CD4-positive, alpha-beta T cell (primary cell): ENCODE measurements at regions of chr3 and their contacts with region 1.

Region 1: DNA sequence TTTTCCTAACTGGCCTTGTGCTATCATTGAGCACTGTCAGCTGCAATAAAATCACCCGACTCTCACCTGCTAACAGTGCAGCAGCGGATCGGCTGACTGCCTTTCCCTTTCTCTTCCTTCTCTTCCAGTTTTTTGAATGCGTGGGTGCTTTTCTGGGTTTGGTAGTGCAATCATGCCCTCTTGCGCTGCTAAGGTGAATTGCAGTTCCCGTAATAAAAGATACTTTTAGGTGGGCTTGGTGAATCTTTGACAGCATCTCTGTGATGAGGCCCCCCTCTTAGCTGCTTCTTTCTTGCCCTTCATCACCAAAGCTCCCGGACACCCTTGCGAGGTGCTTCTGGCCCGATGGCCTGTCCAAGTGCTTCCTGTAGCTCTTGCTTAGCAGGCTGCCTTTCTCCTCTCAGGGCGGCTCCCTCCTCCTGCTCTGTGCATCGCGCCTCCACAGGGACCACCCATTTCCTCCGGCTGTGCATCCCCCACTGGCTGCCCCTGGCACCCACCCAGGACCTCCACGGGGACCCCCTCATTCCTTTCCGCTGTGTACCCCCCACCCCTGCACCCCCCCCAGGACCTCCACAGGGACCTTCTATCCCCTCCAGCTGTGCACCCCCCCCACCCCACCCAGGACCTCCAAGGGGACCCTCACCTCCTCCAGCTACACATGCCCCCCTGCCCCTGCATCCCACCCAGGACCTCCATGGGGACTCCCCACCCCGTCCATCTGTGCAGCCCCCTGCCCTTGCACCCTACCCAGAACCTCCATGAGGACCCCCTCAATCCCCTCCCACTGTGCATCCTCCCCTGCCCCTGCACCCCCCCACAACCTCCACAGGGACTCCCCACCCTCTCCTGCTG is 50.8 kb upstream of the RPL32 start:
- DNase-seq: peak in 9 of 14 experiments; percentile 14 to 75 (median 29)
- ATAC-seq: peak; percentile 66
- H3K4me3 ChIP-seq: no peak overlapping the region
- H3K4me3 Mint-ChIP-seq: peak overlapping the region; percentile 7
- H3K27ac ChIP-seq: no peak overlapping the region
- H3K27ac Mint-ChIP-seq: no peak overlapping the region
- H3K4me1 ChIP-seq: peaks cover 11% of the 10 kb centered on the region
- H3K4me1 Mint-ChIP-seq: peaks cover 16% of the 10 kb centered on the region
- H3K27me3 ChIP-seq: peaks cover 5 to 7% of the 10 kb centered on the region in 2 experiments
- H3K27me3 Mint-ChIP-seq: peaks cover 20% of the 10 kb centered on the region
- CTCF ChIP-seq: peak; percentile 93

Region 2: DNA sequence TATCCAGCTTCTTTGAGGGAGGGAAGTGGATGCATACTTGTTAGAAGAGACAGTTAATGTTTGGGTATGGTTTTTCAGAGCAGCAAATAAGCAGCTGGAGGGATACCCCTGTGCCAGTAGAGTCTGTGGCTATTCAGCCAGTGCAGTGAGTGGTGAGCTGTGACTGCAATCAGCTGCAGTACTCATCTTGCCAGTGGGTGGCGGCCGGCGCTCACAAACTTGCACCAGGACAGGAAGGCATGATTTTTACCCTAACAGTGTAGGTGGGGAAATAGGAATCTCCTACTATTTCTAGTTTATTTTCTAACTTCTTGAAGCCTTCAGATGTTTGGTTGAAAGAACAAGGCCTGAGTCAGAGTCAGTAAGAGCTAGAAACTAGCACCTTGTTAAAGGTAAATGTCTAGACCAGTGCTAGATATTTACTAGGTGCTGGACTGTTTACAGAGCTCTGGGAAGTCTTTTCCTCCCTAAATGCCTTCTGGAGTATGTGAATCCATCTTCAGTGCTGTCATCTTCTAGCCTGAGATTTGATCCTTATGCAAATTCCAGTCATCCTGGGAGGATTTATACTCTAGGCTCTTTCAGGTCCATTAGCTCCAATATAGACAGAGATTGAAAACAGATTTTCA is 757.1 kb before region 1 on chr3:
- CTCF ChIA-PET with region 1: no interaction called
- POLR2A ChIA-PET with region 1: no interaction called
- intact Hi-C with region 1: loop called in 1 of 2 experiments (anchors 10 kb)
- DNase-seq: peak; percentile 25 to 75 (median 45)
- ATAC-seq: peak; percentile 86
- H3K4me3 ChIP-seq: no peak overlapping the region
- H3K4me3 Mint-ChIP-seq: no peak overlapping the region
- H3K27ac ChIP-seq: no peak overlapping the region
- H3K27ac Mint-ChIP-seq: no peak overlapping the region
- H3K4me1 ChIP-seq: no peaks in the 10 kb centered on the region
- H3K4me1 Mint-ChIP-seq: no peaks in the 10 kb centered on the region
- H3K27me3 ChIP-seq: peaks cover 0 to 5% of the 10 kb centered on the region in 2 experiments
- H3K27me3 Mint-ChIP-seq: peaks cover 20% of the 10 kb centered on the region
- CTCF ChIP-seq: peak; percentile 77

Region 3: GRCh38 chr3:12495749-12496452 is 396.3 kb before region 1 on chr3:
- CTCF ChIA-PET with region 1: no interaction called
- POLR2A ChIA-PET with region 1: no interaction called
- intact Hi-C with region 1: no loop called
- DNase-seq: no peak
- ATAC-seq: no peak
- H3K4me3 ChIP-seq: no peak overlapping the region
- H3K4me3 Mint-ChIP-seq: no peak overlapping the region
- H3K27ac ChIP-seq: no peak overlapping the region
- H3K27ac Mint-ChIP-seq: no peak overlapping the region
- H3K4me1 ChIP-seq: no peaks in the 10 kb centered on the region
- H3K4me1 Mint-ChIP-seq: no peaks in the 10 kb centered on the region
- H3K27me3 ChIP-seq: no peaks in the 10 kb centered on the region
- H3K27me3 Mint-ChIP-seq: no peaks in the 10 kb centered on the region
- CTCF ChIP-seq: no peak

Region 4: GRCh38 chr3:12706504-12707253 is 185.5 kb before region 1 on chr3:
- CTCF ChIA-PET with region 1: no interaction called
- POLR2A ChIA-PET with region 1: no interaction called
- intact Hi-C with region 1: loop called (anchors 5 kb)
- DNase-seq: peak; percentile 12 to 81 (median 35)
- ATAC-seq: peak; percentile 99
- H3K4me3 ChIP-seq: no peak overlapping the region
- H3K4me3 Mint-ChIP-seq: no peak overlapping the region
- H3K27ac ChIP-seq: no peak overlapping the region
- H3K27ac Mint-ChIP-seq: no peak overlapping the region
- H3K4me1 ChIP-seq: no peaks in the 10 kb centered on the region
- H3K4me1 Mint-ChIP-seq: no peaks in the 10 kb centered on the region
- H3K27me3 ChIP-seq: no peaks in the 10 kb centered on the region
- H3K27me3 Mint-ChIP-seq: no peaks in the 10 kb centered on the region
- CTCF ChIP-seq: peak; percentile 77

Region 5: GRCh38 chr3:12782172-12782815 is 109.9 kb before region 1 on chr3:
- CTCF ChIA-PET with region 1: no interaction called
- POLR2A ChIA-PET with region 1: no interaction called
- intact Hi-C with region 1: loop called (anchors 1 kb)
- DNase-seq: no peak
- ATAC-seq: no peak
- H3K4me3 ChIP-seq: no peak overlapping the region
- H3K4me3 Mint-ChIP-seq: no peak overlapping the region
- H3K27ac ChIP-seq: no peak overlapping the region
- H3K27ac Mint-ChIP-seq: no peak overlapping the region
- H3K4me1 ChIP-seq: no peaks in the 10 kb centered on the region
- H3K4me1 Mint-ChIP-seq: no peaks in the 10 kb centered on the region
- H3K27me3 ChIP-seq: no peaks in the 10 kb centered on the region
- H3K27me3 Mint-ChIP-seq: peaks cover 51% of the 10 kb centered on the region
- CTCF ChIP-seq: no peak

Region 6: DNA sequence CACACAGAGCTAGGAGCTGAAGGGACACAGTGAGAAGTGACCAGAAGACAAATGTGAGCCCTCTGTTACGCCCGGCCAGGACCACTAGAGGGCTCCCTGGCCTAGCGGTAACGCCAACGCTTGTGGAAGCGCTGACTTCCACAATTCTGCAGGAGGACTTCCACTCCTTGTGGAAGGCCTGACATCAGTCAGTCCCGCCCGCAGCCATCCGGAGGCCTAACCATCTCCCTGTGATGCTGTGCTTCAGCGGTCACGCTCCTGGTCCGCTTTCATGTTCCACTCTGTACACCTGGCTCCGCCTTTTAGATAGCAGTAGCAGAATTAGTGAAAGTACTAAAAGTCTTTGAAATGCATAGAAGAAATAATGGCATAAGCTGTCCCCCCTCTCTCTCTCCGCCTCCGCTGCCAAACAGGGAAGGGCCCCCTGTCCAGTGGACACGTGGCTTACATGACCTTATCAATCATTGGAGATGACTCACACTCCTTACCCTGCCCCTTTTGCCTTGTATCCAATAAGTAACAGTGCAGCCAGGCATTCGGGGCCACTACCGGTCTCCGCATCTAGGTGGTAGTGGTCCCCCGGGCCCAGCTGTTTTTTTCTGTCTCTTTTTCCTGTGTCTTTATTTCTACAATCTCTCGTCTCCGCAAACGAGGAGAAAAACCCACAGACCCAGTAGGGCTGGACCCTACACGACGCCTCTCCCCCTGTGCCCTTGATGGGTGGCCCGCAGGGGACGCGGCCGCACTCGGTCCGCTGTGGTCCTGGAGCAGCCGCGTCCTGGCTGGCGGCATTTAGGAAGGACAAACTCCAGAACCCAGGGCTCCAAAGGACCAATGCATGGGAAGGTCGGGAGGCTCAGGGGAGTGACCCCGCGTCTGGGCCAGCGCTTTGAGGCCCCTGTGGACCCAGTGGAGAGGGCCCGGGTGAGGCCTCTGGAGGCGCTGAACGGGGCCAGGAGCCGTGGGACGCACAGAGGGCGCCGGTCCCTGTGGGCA is 23.9 kb before region 1 on chr3:
- CTCF ChIA-PET with region 1: interaction called, 3 read pairs
- POLR2A ChIA-PET with region 1: no interaction called
- intact Hi-C with region 1: loop called (anchors 1 kb)
- DNase-seq: peak in 13 of 14 experiments; percentile 12 to 78 (median 46)
- ATAC-seq: peak; percentile 82
- H3K4me3 ChIP-seq: peak overlapping the region; percentile 54
- H3K4me3 Mint-ChIP-seq: peak overlapping the region; percentile 90
- H3K27ac ChIP-seq: no peak overlapping the region
- H3K27ac Mint-ChIP-seq: no peak overlapping the region
- H3K4me1 ChIP-seq: peaks cover 26% of the 10 kb centered on the region
- H3K4me1 Mint-ChIP-seq: peaks cover 14% of the 10 kb centered on the region
- H3K27me3 ChIP-seq: peaks cover 9 to 15% of the 10 kb centered on the region in 2 experiments
- H3K27me3 Mint-ChIP-seq: peaks cover 40% of the 10 kb centered on the region
- CTCF ChIP-seq: peak; percentile 87

Region 7: GRCh38 chr3:12916159-12916558 is 23.9 kb after region 1 on chr3:
- CTCF ChIA-PET with region 1: no interaction called
- POLR2A ChIA-PET with region 1: no interaction called
- intact Hi-C with region 1: no loop called
- DNase-seq: peak in 7 of 14 experiments; percentile 8 to 70 (median 18)
- ATAC-seq: peak; percentile 55
- H3K4me3 ChIP-seq: no peak overlapping the region
- H3K4me3 Mint-ChIP-seq: peak overlapping the region; percentile 15
- H3K27ac ChIP-seq: peak overlapping the region in 1 of 2 donors; percentile 40
- H3K27ac Mint-ChIP-seq: peak overlapping the region; percentile 81
- H3K4me1 ChIP-seq: peaks cover 43% of the 10 kb centered on the region
- H3K4me1 Mint-ChIP-seq: peaks cover 31% of the 10 kb centered on the region
- H3K27me3 ChIP-seq: no peaks in the 10 kb centered on the region
- H3K27me3 Mint-ChIP-seq: no peaks in the 10 kb centered on the region
- CTCF ChIP-seq: no peak